ENCODE measurements at regions of chr1 and their contacts with region 1.

Region 1: GRCh38 chr1:32500387-32501209 is 35.7 kb downstream of the ZBTB8B start:
- DNase-seq: peak; percentile 67
- H3K4me3 Mint-ChIP-seq: peak overlapping the region; percentile 90
- H3K27ac Mint-ChIP-seq: peak overlapping the region; percentile 91
- H3K4me1 Mint-ChIP-seq: peaks cover 12% of the 10 kb centered on the region
- H3K27me3 Mint-ChIP-seq: no peaks in the 10 kb centered on the region
- CTCF ChIP-seq: no peak

Region 2: DNA sequence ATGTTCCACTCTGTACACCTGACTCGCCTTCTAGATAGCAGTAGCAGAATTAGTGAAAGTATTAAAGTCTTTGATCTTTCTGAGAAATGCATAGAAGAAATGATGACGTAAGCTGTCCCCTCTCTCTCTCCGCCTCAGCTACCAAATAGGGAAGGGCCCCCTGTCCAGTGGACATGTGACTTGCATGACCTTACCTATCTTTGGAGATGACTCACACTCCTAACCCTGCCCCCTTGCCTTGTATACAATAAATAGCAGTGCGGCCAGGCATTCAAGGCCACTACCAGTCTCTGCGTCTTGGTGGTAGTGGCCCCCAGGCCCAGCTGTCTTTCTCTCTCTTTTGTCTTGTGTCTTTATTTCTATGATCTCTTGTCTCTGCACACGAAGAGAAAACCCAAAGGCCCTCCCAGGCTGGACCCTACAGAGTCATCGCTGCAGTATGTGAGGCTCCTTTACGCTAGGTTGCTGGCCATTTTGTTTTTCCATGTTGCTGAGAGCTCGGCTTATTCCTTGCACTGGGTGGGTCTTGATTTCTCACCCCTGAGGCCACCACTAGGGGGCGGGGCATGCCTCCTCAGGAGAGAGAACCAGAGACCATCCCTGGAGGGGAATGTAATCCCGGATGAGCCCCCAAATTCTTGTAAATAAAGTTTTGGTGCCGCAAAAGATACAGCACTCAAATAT is 51.7 kb before region 1 on chr1:
- CTCF ChIA-PET with region 1: interaction called, 3 read pairs
- POLR2A ChIA-PET with region 1: interaction called, 3 read pairs
- intact Hi-C with region 1: loop called (anchors 1 kb)
- DNase-seq: peak; percentile 69
- H3K4me3 Mint-ChIP-seq: no peak overlapping the region
- H3K27ac Mint-ChIP-seq: no peak overlapping the region
- H3K4me1 Mint-ChIP-seq: peaks cover 9% of the 10 kb centered on the region
- H3K27me3 Mint-ChIP-seq: peaks cover 13% of the 10 kb centered on the region
- CTCF ChIP-seq: peak; percentile 28

Measured in MCF 10A (cell line).